Activated T-helper 2 cell treated with anti-CD3 and anti-CD28 coated beads, Interferon-gamma antibody, Interleukin-2, Interleukin-4, amounts not matched to agents 10 μg/mL and 5 μg/mL and 100 μg/mL, durations not matched to agents 14 hours and 24 hours and 36 hours (primary cell): ENCODE measurements at regions of chr11 and their contacts with region 1.

Region 1: DNA sequence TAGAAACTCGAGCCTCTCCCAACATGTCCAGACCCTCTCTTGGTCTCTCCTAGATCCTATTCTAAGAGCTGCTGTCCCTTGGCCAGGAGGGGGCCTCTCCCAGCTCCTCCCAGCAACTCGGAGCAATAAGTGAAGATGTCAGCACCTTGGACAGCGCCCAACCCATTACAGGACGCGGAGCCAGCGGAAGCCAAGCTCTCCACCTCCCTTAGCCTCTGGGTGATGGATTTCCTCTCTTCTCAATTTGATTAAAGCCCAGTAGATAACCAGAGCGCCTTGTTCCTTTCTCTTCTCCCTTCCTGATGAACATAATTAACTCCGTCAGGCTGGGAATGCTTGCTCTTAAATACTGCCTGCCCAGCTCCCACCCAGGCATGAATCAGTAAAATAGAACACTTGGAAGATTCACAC is 26.2 kb upstream of the TPBGL start:
- DNase-seq: peak; percentile 73
- H3K4me3 Mint-ChIP-seq: no peak overlapping the region
- H3K27ac Mint-ChIP-seq: no peak overlapping the region
- H3K4me1 Mint-ChIP-seq: peaks cover 3% of the 10 kb centered on the region
- H3K27me3 Mint-ChIP-seq: peaks cover 7% of the 10 kb centered on the region

Region 2: DNA sequence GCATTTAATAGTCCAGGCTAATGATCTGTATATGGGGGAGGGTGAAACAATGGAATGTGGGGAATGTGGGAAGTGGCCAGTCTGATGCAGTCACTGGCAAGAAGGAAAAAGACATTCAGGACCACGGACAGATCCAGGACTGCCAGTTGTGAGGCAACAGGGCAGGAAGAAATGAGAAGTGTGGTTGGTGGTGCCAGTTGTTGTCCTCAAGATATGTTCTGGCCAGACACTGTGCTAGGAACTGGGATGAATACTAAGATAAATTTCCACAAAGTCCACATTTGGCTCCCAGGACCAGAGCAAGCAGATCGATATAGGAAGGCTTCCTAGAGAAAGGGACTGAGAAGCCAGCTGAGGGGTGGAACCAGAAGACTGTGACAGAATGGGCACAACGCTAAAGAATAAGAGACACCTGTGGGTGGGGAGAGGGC is 19.3 kb after region 1 on chr11:
- intact Hi-C with region 1: loop called (anchors 2 kb)
- DNase-seq: no peak
- H3K4me3 Mint-ChIP-seq: no peak overlapping the region
- H3K27ac Mint-ChIP-seq: no peak overlapping the region
- H3K4me1 Mint-ChIP-seq: no peaks in the 10 kb centered on the region
- H3K27me3 Mint-ChIP-seq: peaks cover 6% of the 10 kb centered on the region

Region 3: GRCh38 chr11:75241036-75241905 is 26.9 kb after region 1 on chr11:
- intact Hi-C with region 1: loop called (anchors 2 kb)
- DNase-seq: peak; percentile 86
- H3K4me3 Mint-ChIP-seq: peak overlapping the region; percentile 62
- H3K27ac Mint-ChIP-seq: no peak overlapping the region
- H3K4me1 Mint-ChIP-seq: peaks cover 4% of the 10 kb centered on the region
- H3K27me3 Mint-ChIP-seq: peaks cover 55% of the 10 kb centered on the region

Region 4: GRCh38 chr11:75428281-75428724 is 213.9 kb after region 1 on chr11:
- intact Hi-C with region 1: no loop called
- DNase-seq: peak; percentile 68
- H3K4me3 Mint-ChIP-seq: peak overlapping the region; percentile 42
- H3K27ac Mint-ChIP-seq: no peak overlapping the region
- H3K4me1 Mint-ChIP-seq: peaks cover 10% of the 10 kb centered on the region
- H3K27me3 Mint-ChIP-seq: peaks cover 47% of the 10 kb centered on the region